ENCODE measurements at regions of chr20 and their contacts with region 1.

Region 1: DNA sequence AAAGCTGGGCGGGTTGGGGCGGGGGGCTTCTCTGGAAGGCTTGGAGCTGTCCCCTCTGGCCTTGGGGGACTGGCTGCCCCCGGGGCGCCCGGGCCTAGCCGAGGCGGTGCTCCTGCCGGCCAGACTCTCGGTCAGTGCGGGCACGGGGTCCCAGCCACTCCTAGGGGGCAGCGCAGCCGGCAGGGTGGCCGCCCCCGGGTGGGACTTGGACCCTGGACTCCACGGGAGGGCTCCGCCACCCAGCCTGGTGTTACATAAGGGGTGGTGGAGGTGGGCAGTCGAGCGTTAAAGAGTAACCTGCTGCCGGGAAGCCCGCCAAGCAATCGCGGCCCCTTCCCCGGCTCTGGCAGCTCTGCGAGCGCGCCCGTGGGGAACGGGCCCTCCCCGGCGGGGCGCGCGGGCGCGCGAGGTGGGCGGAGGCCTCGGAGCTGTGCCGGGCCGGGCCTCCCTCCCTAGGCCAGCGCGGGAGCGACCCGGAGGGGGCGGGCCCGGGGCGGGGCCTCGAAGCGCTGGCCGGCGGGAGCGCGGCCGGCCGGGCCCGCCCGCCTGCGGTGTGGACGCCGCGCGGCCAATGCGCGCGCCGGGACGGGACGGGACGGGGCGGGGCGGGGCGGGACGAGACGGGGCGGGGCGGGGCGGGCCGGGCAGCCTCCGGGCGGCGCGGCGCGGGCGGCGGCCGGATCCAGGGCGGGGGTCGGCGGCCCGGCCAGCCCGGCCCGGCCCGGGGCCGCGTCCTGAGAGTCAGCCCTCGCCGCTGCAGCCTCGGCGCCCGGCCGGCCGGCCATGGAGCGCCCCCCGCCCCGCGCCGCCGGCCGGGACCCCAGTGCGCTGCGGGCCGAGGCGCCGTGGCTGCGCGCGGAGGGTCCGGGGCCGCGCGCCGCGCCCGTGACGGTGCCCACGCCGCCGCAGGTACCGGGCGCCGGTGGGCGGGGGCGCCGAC is at the start of gene SLC2A4RG:
- DNase-seq: peak; percentile 85 to 96
- H3K4me3 ChIP-seq: peak within 1 kb of the TSS; percentile 72
- H3K4me3 Mint-ChIP-seq: peak within 1 kb of the TSS; percentile 88
- H3K27ac Mint-ChIP-seq: peak within 1 kb of the TSS; percentile 87
- H3K4me1 ChIP-seq: peaks cover 24% of the 10 kb centered on the region
- H3K4me1 Mint-ChIP-seq: no peaks in the 10 kb centered on the region
- H3K27me3 ChIP-seq: no peaks in the 10 kb centered on the region
- H3K27me3 Mint-ChIP-seq: no peaks in the 10 kb centered on the region
- CTCF ChIP-seq: no peak
- total RNA-seq, gene SLC2A4RG: 211 and 234 TPM in 2 replicates

Region 2: DNA sequence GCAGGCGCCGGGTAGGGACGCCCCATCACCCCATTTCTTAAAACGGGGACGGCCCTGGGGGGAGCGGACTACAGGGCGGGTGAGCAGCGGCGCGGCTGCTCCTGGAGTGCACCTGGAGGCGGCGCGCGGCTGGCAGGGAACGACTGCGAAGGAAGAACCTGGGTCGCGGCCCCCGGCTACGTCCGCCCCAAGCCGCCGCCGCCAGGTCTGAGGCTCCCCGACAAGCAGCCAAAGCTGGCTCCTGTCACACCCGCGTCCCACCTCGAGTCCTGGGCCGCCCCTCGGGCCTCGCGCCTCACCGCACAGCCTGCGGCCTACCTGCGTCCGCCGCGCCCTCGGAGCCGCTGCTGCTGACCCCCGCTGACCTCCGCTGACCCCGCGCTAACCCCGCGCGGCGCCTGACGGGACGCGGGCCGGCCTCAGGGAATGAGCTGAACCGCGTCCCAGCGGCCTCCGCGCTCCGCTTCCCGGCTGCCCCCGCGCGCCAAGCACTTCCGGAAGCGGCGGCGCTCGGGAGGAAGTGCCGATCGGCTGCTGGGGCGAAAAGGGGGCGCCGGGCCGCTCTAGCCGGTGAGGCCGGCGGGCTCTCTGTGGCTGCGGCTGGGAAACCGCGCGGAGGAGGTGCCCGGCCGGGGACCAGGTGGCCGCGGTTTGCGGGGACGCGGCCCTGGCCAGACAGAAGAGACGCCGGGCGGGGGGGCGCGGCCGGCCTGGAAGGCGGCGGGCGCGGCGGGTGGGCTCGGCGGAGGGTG is 31.7 kb before region 1 on chr20 and contains the starts of genes ARFRP1 and ZGPAT:
- CTCF ChIA-PET with region 1: interaction called, 25 read pairs
- POLR2A ChIA-PET with region 1: interaction called, 25 read pairs
- intact Hi-C with region 1: loop called (anchors 1 kb)
- DNase-seq: peak; percentile 94 to 99
- H3K4me3 ChIP-seq: peak within 1 kb of the TSS; percentile 96
- H3K4me3 Mint-ChIP-seq: peak within 1 kb of the TSS; percentile 87
- H3K27ac Mint-ChIP-seq: peak within 1 kb of the TSS; percentile 84
- H3K4me1 ChIP-seq: peaks cover 14% of the 10 kb centered on the region
- H3K4me1 Mint-ChIP-seq: peaks cover 16% of the 10 kb centered on the region
- H3K27me3 ChIP-seq: no peaks in the 10 kb centered on the region
- H3K27me3 Mint-ChIP-seq: no peaks in the 10 kb centered on the region
- CTCF ChIP-seq: peak in 1 of 2 experiments; percentile 13
- total RNA-seq, gene ARFRP1: 119 and 126 TPM in 2 replicates
- total RNA-seq, gene ZGPAT: 69.3 and 74.7 TPM in 2 replicates

Region 3: DNA sequence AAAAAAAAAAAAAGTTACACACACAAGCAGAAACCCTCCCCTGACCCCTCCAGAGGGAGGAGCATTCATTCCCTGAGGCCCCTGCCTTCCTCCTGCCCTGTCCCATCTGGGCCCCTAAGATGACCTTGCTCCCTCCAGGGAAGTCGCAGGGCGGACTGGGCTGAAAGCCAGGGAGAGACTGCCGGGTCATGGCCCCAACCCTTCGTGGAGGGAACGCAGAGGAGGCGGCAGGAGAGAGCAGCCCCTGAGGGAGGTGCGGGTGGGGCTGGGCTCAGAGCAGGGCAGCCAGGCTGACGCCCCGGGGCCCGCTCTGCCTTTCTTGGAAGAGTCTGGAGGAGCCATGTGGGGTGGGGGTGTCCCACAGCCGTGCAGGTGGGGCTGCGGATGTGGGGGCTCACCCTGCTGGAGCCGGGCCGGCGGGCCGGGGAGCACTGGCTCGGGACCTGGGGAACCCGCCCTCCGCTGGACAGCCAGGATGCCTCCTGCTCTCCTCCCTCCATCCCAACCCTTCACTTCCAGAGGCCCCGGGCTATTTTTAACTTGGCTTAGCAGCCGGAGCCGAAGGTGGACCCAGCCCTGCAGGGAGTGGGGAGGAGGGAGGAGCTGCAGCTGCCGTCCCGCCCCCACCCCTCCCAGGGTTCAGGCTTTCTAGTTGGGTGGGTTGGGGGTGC is 106.9 kb after region 1 on chr20:
- CTCF ChIA-PET with region 1: no interaction called
- POLR2A ChIA-PET with region 1: no interaction called
- intact Hi-C with region 1: no loop called
- DNase-seq: peak; percentile 78 to 92
- H3K4me3 ChIP-seq: peak overlapping the region; percentile 15; the same call in 1 of the 2 replicates
- H3K4me3 Mint-ChIP-seq: peak overlapping the region; percentile 37
- H3K27ac Mint-ChIP-seq: peak overlapping the region; percentile 19
- H3K4me1 ChIP-seq: peaks cover 27% of the 10 kb centered on the region
- H3K4me1 Mint-ChIP-seq: no peaks in the 10 kb centered on the region
- H3K27me3 ChIP-seq: no peaks in the 10 kb centered on the region
- H3K27me3 Mint-ChIP-seq: peaks cover 3% of the 10 kb centered on the region
- CTCF ChIP-seq: no peak